ENCODE measurements at regions of chr5 and their contacts with region 1.

Region 1: DNA sequence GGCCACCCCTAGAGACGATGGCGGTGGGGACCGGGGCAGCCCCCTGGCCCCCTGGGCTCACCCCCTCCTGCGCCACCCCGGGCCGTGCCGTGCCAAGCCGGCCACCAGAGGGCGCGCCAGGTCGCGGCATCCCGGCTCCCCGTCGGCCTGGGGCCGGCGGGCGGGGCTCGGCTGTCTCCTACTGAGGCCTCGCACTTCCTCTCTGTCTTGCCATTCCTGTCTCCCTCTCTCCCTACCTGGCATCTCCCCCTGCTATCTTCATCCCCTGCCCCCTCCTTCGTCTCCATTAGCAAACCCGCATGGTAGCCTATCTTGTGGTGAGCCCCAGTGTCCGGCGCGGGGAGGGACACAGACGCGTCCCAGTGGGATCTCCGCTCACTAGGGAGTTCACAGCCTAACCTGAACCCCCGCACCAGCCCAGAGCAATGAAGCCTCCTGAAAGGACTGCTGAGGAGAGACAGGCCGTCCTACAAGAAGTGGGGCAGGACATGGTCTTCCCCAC is 29.8 kb upstream of the FABP6 start:
- DNase-seq: peak; percentile 39
- H3K4me3 ChIP-seq: peak overlapping the region in 2 of 3 experiments; percentile 12 to 38
- H3K27ac ChIP-seq: no peak overlapping the region
- H3K4me1 ChIP-seq: no peaks in the 10 kb centered on the region
- H3K27me3 ChIP-seq: no peaks in the 10 kb centered on the region
- CTCF ChIP-seq: peak; percentile 60 to 75

Region 2: DNA sequence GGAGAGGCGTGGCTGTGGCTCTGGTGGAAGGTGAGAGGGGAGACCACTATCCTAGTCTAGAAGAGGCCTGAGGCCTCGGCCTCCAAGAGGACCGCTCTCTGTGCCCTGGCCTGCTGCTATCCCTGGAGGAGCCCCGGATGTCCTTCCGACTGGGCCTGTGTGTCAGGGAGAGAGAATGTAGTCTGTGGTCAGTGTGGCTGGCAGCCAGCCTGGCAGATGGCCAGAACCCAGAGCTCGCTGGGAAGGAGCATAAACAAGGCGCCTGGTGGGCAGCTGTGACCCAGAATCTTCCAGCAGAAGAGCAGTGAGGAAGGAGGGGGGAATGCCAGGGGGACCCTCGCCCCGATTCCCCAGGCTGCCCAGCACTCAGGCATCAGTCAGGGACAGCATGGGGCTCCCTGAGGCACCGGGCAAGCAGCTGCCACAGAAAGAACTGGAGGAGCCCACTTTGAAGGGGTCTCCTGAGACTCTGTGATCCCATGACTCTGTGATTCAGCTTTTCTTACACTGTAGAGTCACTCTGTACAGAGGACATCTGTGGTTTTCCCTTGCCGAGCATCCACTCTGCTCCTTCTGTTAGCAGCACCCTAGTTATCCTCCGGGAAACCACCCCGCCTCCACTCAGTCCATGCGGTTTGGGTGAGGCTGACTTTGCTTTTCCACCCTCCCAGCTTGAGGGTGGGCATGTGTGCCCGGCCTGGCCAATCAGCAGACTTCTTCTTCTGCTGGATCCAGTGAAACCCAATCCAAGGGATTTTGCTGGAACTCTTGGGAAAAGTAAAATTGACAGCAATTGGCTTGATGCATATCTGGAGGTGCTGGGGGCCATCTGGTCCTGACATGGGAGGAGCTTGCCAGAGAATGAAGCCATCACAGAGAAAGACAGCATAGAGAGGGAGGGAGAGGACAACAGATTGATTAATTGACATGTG is 34.1 kb before region 1 on chr5:
- CTCF ChIA-PET with region 1: no interaction called
- dilution Hi-C with region 1: no loop called
- in situ Hi-C with region 1: no loop called
- intact Hi-C with region 1: no loop called
- DNase-seq: peak; percentile 98
- H3K4me3 ChIP-seq: peak overlapping the region in 1 of 3 experiments; percentile 18
- H3K27ac ChIP-seq: peak overlapping the region; percentile 90
- H3K4me1 ChIP-seq: peaks cover 30% of the 10 kb centered on the region
- H3K27me3 ChIP-seq: no peaks in the 10 kb centered on the region
- CTCF ChIP-seq: no peak

Region 3: DNA sequence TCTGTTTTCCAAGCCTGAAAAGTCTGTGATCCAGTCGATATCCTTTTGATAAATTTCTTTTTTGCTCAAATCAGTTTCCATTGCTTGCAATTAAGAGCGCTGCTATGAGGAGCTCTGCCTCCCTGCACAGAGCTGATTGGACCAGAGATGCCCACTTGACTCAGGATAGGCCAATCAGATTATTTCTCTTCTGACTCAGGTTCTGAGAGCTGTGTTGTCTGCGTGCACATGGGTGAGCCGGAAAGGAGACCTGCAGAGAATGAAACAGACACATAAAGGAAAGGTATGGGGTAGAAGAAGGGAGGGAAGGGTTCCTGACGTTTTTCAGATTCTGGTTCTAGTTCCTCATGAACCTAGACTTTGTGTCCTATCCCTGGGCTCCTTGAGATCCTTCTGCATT is 14.1 kb after region 1 on chr5:
- CTCF ChIA-PET with region 1: no interaction called
- dilution Hi-C with region 1: no loop called
- in situ Hi-C with region 1: no loop called
- intact Hi-C with region 1: no loop called
- DNase-seq: no peak
- H3K4me3 ChIP-seq: no peak overlapping the region
- H3K27ac ChIP-seq: no peak overlapping the region
- H3K4me1 ChIP-seq: peaks cover 9% of the 10 kb centered on the region
- H3K27me3 ChIP-seq: no peaks in the 10 kb centered on the region
- CTCF ChIP-seq: no peak

Region 4: GRCh38 chr5:160287378-160288051 is 88.1 kb after region 1 on chr5:
- CTCF ChIA-PET with region 1: no interaction called
- dilution Hi-C with region 1: no loop called
- in situ Hi-C with region 1: no loop called
- intact Hi-C with region 1: loop called (anchors 1 kb)
- DNase-seq: peak; percentile 65
- H3K4me3 ChIP-seq: no peak overlapping the region
- H3K27ac ChIP-seq: no peak overlapping the region
- H3K4me1 ChIP-seq: peaks cover 55% of the 10 kb centered on the region
- H3K27me3 ChIP-seq: no peaks in the 10 kb centered on the region
- CTCF ChIP-seq: no peak

Region 5: DNA sequence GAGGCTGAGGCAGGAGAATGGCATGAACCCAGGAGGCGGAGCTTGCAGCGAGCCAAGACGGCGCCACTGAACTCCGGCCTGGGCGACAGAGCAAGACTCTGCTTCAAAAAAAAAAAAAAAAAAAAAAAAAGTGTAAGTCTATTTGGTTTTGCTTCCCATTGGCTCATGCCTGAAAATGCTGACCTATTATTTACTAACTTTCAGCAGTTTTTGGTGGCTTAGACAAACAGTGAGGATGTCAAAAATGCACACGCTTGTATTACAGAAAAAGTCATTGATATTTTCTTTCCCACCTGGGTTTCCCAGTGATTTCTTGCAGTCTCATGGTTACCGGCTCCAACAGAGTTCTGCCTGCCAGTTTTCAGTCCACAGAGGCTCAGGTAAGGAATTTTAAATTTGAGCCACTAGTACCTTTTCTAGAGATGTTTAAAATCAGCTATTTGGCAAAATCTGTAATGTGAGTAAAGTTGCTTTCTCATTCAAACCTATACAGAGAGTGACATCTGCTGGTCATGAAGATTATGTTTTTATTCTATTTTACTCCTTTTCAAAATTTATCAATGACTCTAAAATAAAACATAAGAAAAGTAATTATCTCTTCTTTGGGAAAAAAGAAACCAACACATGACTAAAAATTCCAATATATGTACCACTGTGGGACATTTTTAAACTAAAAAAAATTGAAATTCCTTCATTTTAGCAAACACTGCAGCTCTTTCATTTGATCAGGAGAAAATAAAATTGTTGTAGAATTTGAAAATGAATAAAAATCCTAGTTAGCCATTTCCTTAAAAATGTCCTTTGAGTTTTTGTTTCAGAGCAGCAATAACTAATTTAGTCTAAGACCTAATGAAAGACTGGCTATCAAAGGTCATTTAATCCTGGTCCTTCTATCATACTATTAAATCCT is 191.6 kb after region 1 on chr5:
- CTCF ChIA-PET with region 1: no interaction called
- dilution Hi-C with region 1: no loop called
- in situ Hi-C with region 1: no loop called
- intact Hi-C with region 1: loop called (anchors 1 kb)
- DNase-seq: no peak
- H3K4me3 ChIP-seq: no peak overlapping the region
- H3K27ac ChIP-seq: no peak overlapping the region
- H3K4me1 ChIP-seq: no peaks in the 10 kb centered on the region
- H3K27me3 ChIP-seq: no peaks in the 10 kb centered on the region
- CTCF ChIP-seq: peak; percentile 41 to 45